GM12878 (cell line): ENCODE measurements at regions of chr12 and their contacts with region 1.

Region 1: GRCh38 chr12:46071769-46072624 is 81.6 kb upstream of the SCAF11 start:
- DNase-seq: peak; percentile 57
- ATAC-seq: peak; percentile 99
- H3K4me3 ChIP-seq: no peak overlapping the region
- H3K27ac ChIP-seq: peak overlapping the region; percentile 39; the same call in 1 of the 2 replicates
- H3K4me1 ChIP-seq: peaks cover 11% of the 10 kb centered on the region
- H3K27me3 ChIP-seq: no peaks in the 10 kb centered on the region
- CTCF ChIP-seq: peak; percentile 97 to 100 (median 99)
- EP300 ChIP-seq: no peak
- POLR2A ChIP-seq: no peak
- RAD21 ChIP-seq: peak; percentile 97

Region 2: DNA sequence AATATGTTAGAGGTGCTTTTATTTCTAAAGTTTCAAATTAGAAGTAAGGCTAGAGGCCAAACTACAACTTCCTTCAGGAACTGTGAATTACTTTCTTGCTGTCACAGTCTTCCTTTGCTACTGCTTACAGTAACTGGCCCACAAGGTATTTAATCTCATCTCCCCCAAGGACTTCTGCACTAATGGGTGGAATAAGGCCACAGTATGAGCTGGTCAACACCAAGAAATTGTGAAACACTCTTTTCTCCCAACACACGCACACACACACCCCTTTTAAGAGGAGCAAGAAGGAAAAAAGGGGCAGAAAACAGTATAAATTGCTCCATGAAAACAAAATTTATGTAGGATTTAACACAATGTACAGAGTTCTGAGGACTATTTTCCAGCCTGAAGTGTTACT is 127.2 kb before region 1 on chr12:
- CTCF ChIA-PET with region 1: no interaction called
- POLR2A ChIA-PET with region 1: no interaction called
- RAD21 ChIA-PET with region 1: no interaction called
- SMC1A ChIA-PET with region 1: no interaction called
- in situ Hi-C with region 1: no loop called
- intact Hi-C with region 1: no loop called
- DNase-seq: no peak
- ATAC-seq: no peak
- H3K4me3 ChIP-seq: no peak overlapping the region
- H3K27ac ChIP-seq: no peak overlapping the region
- H3K4me1 ChIP-seq: no peaks in the 10 kb centered on the region
- H3K27me3 ChIP-seq: no peaks in the 10 kb centered on the region
- CTCF ChIP-seq: no peak
- EP300 ChIP-seq: no peak
- POLR2A ChIP-seq: no peak
- RAD21 ChIP-seq: no peak

Region 3: DNA sequence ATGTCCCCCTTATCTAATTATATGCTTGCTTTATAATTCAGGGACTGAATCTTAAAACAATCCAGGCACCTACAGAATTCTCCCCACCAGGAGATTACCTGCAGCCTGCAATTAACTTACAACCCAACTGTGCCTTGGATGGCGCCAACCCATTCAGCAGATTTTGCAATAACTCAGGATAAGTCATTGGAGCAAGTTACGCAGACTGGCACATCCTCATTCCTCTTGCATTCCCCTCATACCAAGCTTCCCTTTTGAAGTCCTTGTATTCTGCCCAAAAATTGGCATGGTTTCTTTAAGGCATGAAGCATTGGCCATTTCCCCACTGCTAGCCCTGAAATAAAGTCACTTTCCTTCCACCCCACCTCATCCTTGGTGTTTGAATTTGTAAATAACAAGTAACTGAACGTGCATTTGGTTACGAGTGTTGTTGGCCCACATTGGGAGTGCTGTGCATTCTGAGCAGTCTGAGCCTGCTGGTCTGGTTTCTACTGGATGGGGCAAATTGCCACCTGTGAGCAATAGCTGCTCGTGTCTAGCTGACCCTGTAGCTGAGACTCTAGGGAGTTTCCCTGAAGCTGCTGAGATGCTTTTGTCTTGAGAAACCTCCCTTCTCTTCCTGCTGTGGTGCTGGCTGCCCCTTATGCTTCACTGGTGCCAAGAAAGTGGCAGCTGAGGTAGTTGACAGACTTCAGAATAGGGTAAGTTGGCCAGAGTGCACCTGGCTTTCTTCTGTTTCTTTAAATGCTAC is 17.6 kb after region 1 on chr12:
- CTCF ChIA-PET with region 1: no interaction called
- POLR2A ChIA-PET with region 1: no interaction called
- RAD21 ChIA-PET with region 1: no interaction called
- SMC1A ChIA-PET with region 1: no interaction called
- in situ Hi-C with region 1: no loop called
- intact Hi-C with region 1: no loop called
- DNase-seq: no peak
- ATAC-seq: peak; percentile 40; the same call in 2 of the 3 replicates
- H3K4me3 ChIP-seq: no peak overlapping the region
- H3K27ac ChIP-seq: no peak overlapping the region
- H3K4me1 ChIP-seq: no peaks in the 10 kb centered on the region
- H3K27me3 ChIP-seq: no peaks in the 10 kb centered on the region
- CTCF ChIP-seq: no peak
- EP300 ChIP-seq: no peak
- POLR2A ChIP-seq: no peak
- RAD21 ChIP-seq: no peak

Region 4: DNA sequence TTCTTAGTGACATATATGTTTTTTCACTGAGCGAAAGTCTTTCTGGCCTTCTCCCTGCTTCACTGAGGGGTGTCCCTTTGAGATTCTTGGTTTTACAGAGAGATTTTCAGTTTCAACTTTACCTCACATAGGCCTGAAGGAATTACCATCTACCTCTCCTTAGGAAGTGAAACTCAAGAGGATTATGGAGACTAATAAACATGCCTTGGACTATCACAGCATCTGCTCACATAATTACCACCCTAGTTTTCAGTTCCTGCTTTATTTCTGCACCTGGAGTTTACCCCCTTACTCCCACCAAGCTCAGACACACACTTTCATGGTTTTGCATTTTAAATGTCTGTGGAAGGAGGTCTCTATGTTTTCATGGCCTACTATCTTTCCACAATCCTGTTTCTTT is 36.7 kb after region 1 on chr12:
- CTCF ChIA-PET with region 1: interaction called, 9 read pairs
- POLR2A ChIA-PET with region 1: no interaction called
- RAD21 ChIA-PET with region 1: interaction called, 6 read pairs
- SMC1A ChIA-PET with region 1: interaction called, 6 read pairs
- in situ Hi-C with region 1: no loop called
- intact Hi-C with region 1: loop called (anchors 1 kb)
- DNase-seq: peak; percentile 80
- ATAC-seq: peak; percentile 88
- H3K4me3 ChIP-seq: 0 out of 2 replicates have a peak overlapping the region, but pooled peaks have one; percentile 5
- H3K27ac ChIP-seq: peak overlapping the region; percentile 60; the same call in 1 of the 2 replicates
- H3K4me1 ChIP-seq: peaks cover 30% of the 10 kb centered on the region
- H3K27me3 ChIP-seq: no peaks in the 10 kb centered on the region
- CTCF ChIP-seq: no peak
- EP300 ChIP-seq: peak; percentile 82 to 95
- POLR2A ChIP-seq: no peak
- RAD21 ChIP-seq: no peak

Region 5: GRCh38 chr12:46303039-46303666 is 231.2 kb after region 1 on chr12:
- CTCF ChIA-PET with region 1: interaction called, 33 read pairs
- POLR2A ChIA-PET with region 1: no interaction called
- RAD21 ChIA-PET with region 1: interaction called, 5 read pairs
- SMC1A ChIA-PET with region 1: interaction called, 13 read pairs
- in situ Hi-C with region 1: no loop called
- intact Hi-C with region 1: no loop called
- DNase-seq: peak; percentile 2
- ATAC-seq: peak; percentile 91
- H3K4me3 ChIP-seq: no peak overlapping the region
- H3K27ac ChIP-seq: no peak overlapping the region
- H3K4me1 ChIP-seq: no peaks in the 10 kb centered on the region
- H3K27me3 ChIP-seq: no peaks in the 10 kb centered on the region; a peak in 1 of 4 replicates
- CTCF ChIP-seq: peak; percentile 54 to 58 (median 57)
- EP300 ChIP-seq: no peak
- POLR2A ChIP-seq: no peak
- RAD21 ChIP-seq: peak; percentile 66

Region 6: DNA sequence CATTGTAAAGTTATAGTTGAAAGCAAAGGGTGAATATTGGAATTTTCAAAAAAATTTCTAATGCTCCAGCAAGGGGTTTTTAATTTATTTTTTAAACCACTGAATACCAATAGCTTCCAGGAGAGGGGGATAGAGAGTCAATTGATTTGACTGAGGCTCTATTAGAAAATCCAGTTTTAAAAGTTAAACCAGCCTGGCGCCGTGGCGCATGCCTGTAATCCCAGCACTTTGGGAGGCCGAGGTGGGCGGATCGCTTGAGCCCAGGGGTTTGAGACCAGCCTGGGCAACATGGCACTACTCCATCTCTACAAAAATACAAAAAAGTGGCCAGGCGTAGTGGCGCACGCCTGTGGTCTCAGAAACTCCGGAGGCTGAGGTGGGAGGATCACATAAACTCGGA is 603.7 kb after region 1 on chr12:
- CTCF ChIA-PET with region 1: interaction called, 4 read pairs
- POLR2A ChIA-PET with region 1: no interaction called
- RAD21 ChIA-PET with region 1: no interaction called
- SMC1A ChIA-PET with region 1: no interaction called
- in situ Hi-C with region 1: no loop called
- intact Hi-C with region 1: loop called (anchors 5 kb)
- DNase-seq: no peak
- ATAC-seq: 0 out of 3 replicates have a peak, but pooled peaks have one; percentile 29
- H3K4me3 ChIP-seq: no peak overlapping the region
- H3K27ac ChIP-seq: no peak overlapping the region
- H3K4me1 ChIP-seq: no peaks in the 10 kb centered on the region
- H3K27me3 ChIP-seq: no peaks in the 10 kb centered on the region
- CTCF ChIP-seq: peak; percentile 35 to 39 (median 35); a peak in 4 of 6 replicates
- EP300 ChIP-seq: no peak
- POLR2A ChIP-seq: no peak
- RAD21 ChIP-seq: peak; percentile 62

Region 7: GRCh38 chr12:46933947-46934346 is 862.0 kb after region 1 on chr12:
- CTCF ChIA-PET with region 1: interaction called, 3 read pairs
- POLR2A ChIA-PET with region 1: no interaction called
- RAD21 ChIA-PET with region 1: interaction called, 4 read pairs
- SMC1A ChIA-PET with region 1: interaction called, 5 read pairs
- in situ Hi-C with region 1: no loop called
- intact Hi-C with region 1: loop called (anchors 5 kb)
- DNase-seq: no peak
- ATAC-seq: peak; percentile 70
- H3K4me3 ChIP-seq: no peak overlapping the region
- H3K27ac ChIP-seq: no peak overlapping the region
- H3K4me1 ChIP-seq: no peaks in the 10 kb centered on the region
- H3K27me3 ChIP-seq: no peaks in the 10 kb centered on the region
- CTCF ChIP-seq: peak; percentile 23 to 56 (median 51); a peak in 5 of 6 replicates
- EP300 ChIP-seq: no peak
- POLR2A ChIP-seq: no peak
- RAD21 ChIP-seq: peak; percentile 84

Region 8: GRCh38 chr12:46983393-46984266 is 911.6 kb after region 1 on chr12:
- CTCF ChIA-PET with region 1: interaction called, 5 read pairs
- POLR2A ChIA-PET with region 1: no interaction called
- RAD21 ChIA-PET with region 1: interaction called, 3 read pairs
- SMC1A ChIA-PET with region 1: interaction called, 12 read pairs
- in situ Hi-C with region 1: no loop called
- intact Hi-C with region 1: loop called (anchors 1 kb)
- DNase-seq: peak; percentile 2
- ATAC-seq: peak; percentile 92
- H3K4me3 ChIP-seq: no peak overlapping the region
- H3K27ac ChIP-seq: no peak overlapping the region
- H3K4me1 ChIP-seq: no peaks in the 10 kb centered on the region
- H3K27me3 ChIP-seq: no peaks in the 10 kb centered on the region
- CTCF ChIP-seq: peak; percentile 76 to 80 (median 77)
- EP300 ChIP-seq: no peak
- POLR2A ChIP-seq: no peak
- RAD21 ChIP-seq: peak; percentile 89

Region 9: DNA sequence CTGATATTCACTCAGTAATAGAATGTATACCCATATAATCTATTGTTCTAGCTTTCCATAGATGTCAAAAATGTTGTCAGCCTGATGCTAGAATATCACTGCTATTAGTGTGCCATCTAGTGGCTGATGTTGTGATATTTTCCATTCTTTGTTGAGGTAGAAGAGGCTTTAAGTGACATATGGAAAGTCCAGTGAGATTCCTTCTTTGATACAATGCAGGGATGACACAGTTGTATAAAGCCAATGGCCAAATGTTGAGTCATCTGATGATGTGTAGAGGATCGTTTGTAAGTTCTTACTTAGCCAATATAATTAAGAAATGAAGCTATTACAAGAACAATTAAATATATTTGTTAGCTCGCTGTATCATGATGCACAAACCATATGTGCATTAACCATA is 949.3 kb after region 1 on chr12:
- CTCF ChIA-PET with region 1: interaction called, 35 read pairs
- POLR2A ChIA-PET with region 1: no interaction called
- RAD21 ChIA-PET with region 1: interaction called, 3 read pairs
- SMC1A ChIA-PET with region 1: interaction called, 16 read pairs
- in situ Hi-C with region 1: no loop called
- intact Hi-C with region 1: loop called (anchors 1 kb)
- DNase-seq: peak; percentile 11
- ATAC-seq: peak; percentile 78
- H3K4me3 ChIP-seq: no peak overlapping the region
- H3K27ac ChIP-seq: no peak overlapping the region
- H3K4me1 ChIP-seq: no peaks in the 10 kb centered on the region
- H3K27me3 ChIP-seq: no peaks in the 10 kb centered on the region
- CTCF ChIP-seq: peak; percentile 50 to 68 (median 66)
- EP300 ChIP-seq: no peak
- POLR2A ChIP-seq: no peak
- RAD21 ChIP-seq: peak; percentile 80